Activated CD4-positive, alpha-beta T cell treated with anti-CD3 and anti-CD28 coated beads, Interleukin-2, amount 10 ng/mL, durations not matched to agents 7 days and 5 days (primary cell): ENCODE measurements at regions of chr20 and their contacts with region 1.

Region 1: DNA sequence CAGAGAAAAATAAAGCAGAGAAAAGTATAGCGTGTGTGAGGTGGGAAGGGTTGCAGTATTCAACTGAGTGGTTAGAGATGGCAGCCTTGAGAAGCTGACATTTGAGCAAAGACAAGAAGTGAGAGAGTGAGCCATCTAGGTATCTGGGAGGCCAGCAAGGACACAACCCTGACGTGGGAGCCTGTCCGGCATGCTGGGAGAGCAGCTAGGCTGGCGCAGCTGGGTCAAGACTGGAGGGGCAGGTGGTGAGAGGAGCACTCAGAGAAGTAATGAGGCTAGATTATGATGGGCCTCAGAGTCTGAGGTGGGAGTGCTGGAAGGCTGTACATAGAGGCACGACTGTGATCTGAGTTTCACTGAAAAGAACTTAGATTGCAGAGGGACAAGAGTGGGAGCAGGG is 12.9 kb downstream of the TTPAL start:
- DNase-seq: no peak
- H3K4me3 Mint-ChIP-seq: no peak overlapping the region
- H3K27ac Mint-ChIP-seq: no peak overlapping the region
- H3K4me1 Mint-ChIP-seq: peaks cover 8% of the 10 kb centered on the region
- H3K27me3 Mint-ChIP-seq: no peaks in the 10 kb centered on the region

Region 2: DNA sequence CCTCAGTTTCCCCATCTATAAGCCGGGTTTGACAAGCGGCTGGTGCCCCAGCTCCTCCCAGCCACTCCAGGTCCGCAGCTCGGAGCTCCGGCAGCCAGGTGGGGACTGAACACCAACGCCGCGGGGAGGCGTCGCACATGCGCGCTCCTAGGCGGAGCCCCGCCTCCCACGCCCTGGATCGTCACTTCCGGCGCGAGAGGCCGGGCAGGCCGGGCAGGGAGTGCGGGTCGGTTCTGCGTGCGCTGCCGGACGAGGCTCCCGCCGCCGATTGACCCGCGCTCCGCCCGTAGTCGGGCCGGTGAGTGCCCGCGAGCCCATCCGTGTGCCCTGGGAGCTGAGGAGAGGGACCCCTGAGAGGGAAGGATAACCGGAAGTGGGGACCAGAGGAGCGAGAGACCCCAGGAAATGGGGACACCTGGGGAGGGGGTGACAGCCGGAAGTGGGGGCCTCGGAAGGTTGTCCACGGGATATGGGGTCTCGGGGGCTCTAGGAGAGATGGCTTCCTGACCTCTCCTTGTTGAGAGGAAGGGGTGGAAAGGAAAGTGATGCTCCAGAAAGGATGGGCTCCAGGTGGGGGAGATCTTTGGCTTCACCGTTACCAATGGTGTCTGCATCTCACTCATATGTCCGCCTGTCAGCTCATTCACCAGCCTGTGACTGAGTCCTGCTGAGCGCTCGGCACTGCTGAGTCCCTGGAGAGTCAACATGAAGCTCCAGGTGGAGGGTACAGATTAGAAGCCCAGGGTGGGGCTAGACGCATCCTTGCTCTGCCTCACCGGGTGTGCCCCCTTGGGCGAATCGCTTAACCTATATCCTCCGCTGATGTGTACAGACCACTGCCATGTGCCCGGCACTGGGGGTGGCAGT is 12.6 kb before region 1 on chr20 and contains the start of gene TTPAL:
- CTCF ChIA-PET with region 1: interaction called, 10 read pairs
- POLR2A ChIA-PET with region 1: no interaction called
- DNase-seq: peak; percentile 88
- H3K4me3 Mint-ChIP-seq: peak within 1 kb of the TSS; percentile 94
- H3K27ac Mint-ChIP-seq: peak within 1 kb of the TSS; percentile 98
- H3K4me1 Mint-ChIP-seq: peaks cover 30% of the 10 kb centered on the region
- H3K27me3 Mint-ChIP-seq: no peaks in the 10 kb centered on the region
- total RNA-seq, gene TTPAL: 17.1 to 19.5 TPM

Region 3: GRCh38 chr20:44516491-44516890 is 27.9 kb after region 1 on chr20:
- CTCF ChIA-PET with region 1: no interaction called
- POLR2A ChIA-PET with region 1: no interaction called
- DNase-seq: no peak
- H3K4me3 Mint-ChIP-seq: no peak overlapping the region
- H3K27ac Mint-ChIP-seq: no peak overlapping the region
- H3K4me1 Mint-ChIP-seq: peaks cover 48% of the 10 kb centered on the region
- H3K27me3 Mint-ChIP-seq: no peaks in the 10 kb centered on the region